GM23248 (cell line): ENCODE measurements at regions of chrX and their contacts with region 1.

Region 1: GRCh38 chrX:130196466-130196865 is 24.7 kb downstream of the RAB33A start:
- DNase-seq: peak; percentile 6
- H3K4me3 ChIP-seq: no peak overlapping the region
- H3K27ac ChIP-seq: no peak overlapping the region
- H3K4me1 ChIP-seq: no peaks in the 10 kb centered on the region
- H3K27me3 ChIP-seq: no peaks in the 10 kb centered on the region

Region 2: DNA sequence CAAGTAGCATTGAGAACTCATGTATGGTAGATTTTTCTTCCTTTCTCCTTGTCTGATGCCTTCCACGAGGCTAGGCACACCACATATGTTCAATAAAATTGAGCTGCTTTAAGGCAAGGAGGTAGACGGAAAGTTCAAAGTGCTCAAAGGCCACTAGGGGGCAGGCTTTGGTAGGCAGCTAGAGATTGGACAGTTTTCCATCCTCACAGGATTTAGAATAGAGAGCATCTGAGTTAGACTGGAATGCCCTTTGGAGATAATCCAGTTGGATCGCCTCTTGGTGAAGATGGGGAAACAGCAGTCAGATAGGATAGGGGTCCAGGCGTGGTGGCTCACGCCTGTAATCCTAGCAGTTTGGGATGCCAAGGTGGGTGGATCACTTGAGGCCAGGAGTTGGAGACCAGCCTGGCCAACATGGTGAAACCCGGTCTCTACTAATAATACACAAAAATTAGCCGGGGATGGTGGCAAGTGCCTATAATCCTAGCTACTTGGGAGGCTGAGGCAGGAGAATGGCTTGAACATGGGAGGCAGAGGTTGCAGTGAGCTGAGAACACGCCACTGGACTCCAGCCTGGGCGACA is 116.6 kb before region 1 on chrX:
- in situ Hi-C with region 1: loop called (anchors 10 kb)
- DNase-seq: peak; percentile 81
- H3K4me3 ChIP-seq: no peak overlapping the region
- H3K27ac ChIP-seq: 0 out of 2 replicates have a peak overlapping the region, but pooled peaks have one; percentile 8
- H3K4me1 ChIP-seq: peaks cover 15% of the 10 kb centered on the region
- H3K27me3 ChIP-seq: no peaks in the 10 kb centered on the region